Tibial artery (tissue), 4 donors: ENCODE measurements at regions of chr1 and their contacts with region 1.

Region 1: GRCh38 chr1:110312188-110313121 is 26.7 kb upstream of the RBM15 start:
- DNase-seq: peak; percentile 75 to 84
- H3K4me3 ChIP-seq: no peak overlapping the region
- H3K27ac ChIP-seq: no peak overlapping the region
- H3K4me1 ChIP-seq: peaks cover 0 to 10% (median 3%) of the 10 kb centered on the region in 4 donors
- H3K27me3 ChIP-seq: no peaks in the 10 kb centered on the region
- CTCF ChIP-seq: peak; percentile 89 to 96

Region 2: DNA sequence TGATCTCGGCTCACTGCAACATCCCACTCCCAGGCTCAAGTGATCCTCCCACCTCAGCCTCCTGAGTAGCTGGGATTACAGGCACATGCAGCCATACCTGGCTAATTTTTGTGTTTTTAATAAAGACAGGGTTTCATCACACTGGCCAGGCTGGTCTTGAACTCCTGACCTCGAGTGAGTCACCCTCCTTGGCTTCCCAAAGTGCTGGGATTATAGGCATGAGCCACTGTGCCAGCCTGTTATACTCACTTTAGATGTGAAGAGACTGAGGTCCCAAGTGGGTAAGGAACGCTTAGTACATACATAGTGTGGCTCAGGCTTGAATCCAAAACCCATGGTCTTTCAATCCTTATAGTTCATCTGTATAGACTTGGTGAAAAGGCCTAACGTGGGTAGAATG is 485.0 kb before region 1 on chr1:
- intact Hi-C with region 1: no loop called
- DNase-seq: no peak
- H3K4me3 ChIP-seq: no peak overlapping the region
- H3K27ac ChIP-seq: peak overlapping the region; percentile 28 to 81
- H3K4me1 ChIP-seq: peaks cover 0 to 72% (median 54%) of the 10 kb centered on the region in 4 donors
- H3K27me3 ChIP-seq: no peaks in the 10 kb centered on the region
- CTCF ChIP-seq: no peak

Region 3: GRCh38 chr1:110209715-110210603 is 102.5 kb before region 1 on chr1 and contains the start of gene KCNC4:
- intact Hi-C with region 1: loop called (anchors 1 kb)
- DNase-seq: peak; percentile 89 to 95
- H3K4me3 ChIP-seq: peak within 1 kb of the TSS; percentile 72 to 87
- H3K27ac ChIP-seq: peak within 1 kb of the TSS; percentile 90 to 91
- H3K4me1 ChIP-seq: peaks cover 0 to 53% (median 41%) of the 10 kb centered on the region in 4 donors
- H3K27me3 ChIP-seq: no peaks in the 10 kb centered on the region
- CTCF ChIP-seq: no peak

Region 4: DNA sequence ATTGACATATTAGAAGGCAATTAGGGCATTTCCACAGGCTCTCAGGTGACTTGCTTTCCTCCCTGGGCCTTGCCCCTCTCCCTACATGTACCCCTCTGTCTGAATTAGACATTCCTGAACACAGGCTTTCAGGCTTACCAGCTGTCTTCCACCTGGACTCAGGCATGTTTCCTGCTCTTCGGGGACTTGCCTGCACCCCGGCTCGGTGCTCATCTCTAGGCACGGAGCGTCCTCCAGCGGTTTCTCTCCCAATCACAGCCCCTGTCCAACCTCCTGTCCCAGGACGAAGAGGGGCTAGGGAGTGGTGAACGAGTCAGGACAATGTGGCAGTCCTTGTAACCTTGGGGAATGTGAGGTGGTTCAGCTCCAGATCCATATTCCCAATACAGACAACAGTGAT is 142.7 kb after region 1 on chr1:
- intact Hi-C with region 1: loop called (anchors 5 kb)
- DNase-seq: no peak
- H3K4me3 ChIP-seq: no peak overlapping the region
- H3K27ac ChIP-seq: no peak overlapping the region
- H3K4me1 ChIP-seq: no peaks in the 10 kb centered on the region
- H3K27me3 ChIP-seq: peaks cover 0 to 30% of the 10 kb centered on the region in 2 donors
- CTCF ChIP-seq: no peak